ENCODE measurements at regions of chr1 and their contacts with region 1.

Region 1: GRCh38 chr1:5435414-5435813 is 556.8 kb downstream of the NPHP4 start:
- DNase-seq: no peak
- H3K4me3 ChIP-seq: no peak overlapping the region
- H3K27ac ChIP-seq: no peak overlapping the region; a peak in 1 of 4 replicates
- H3K4me1 ChIP-seq: peaks cover 0 to 22% of the 10 kb centered on the region in 2 experiments; a peak in 1 of 4 replicates
- H3K27me3 ChIP-seq: no peaks in the 10 kb centered on the region
- CTCF ChIP-seq: no peak
- EP300 ChIP-seq: no peak
- RAD21 ChIP-seq: no peak

Region 2: GRCh38 chr1:5448486-5448885 is 13.1 kb after region 1 on chr1:
- CTCF ChIA-PET with region 1: interaction called, 17 read pairs
- POLR2A ChIA-PET with region 1: no interaction called
- DNase-seq: no peak
- H3K4me3 ChIP-seq: no peak overlapping the region
- H3K27ac ChIP-seq: no peak overlapping the region; a peak in 1 of 4 replicates
- H3K4me1 ChIP-seq: peaks cover 0 to 19% of the 10 kb centered on the region in 2 experiments; a peak in 1 of 4 replicates
- H3K27me3 ChIP-seq: no peaks in the 10 kb centered on the region
- CTCF ChIP-seq: no peak
- EP300 ChIP-seq: no peak
- RAD21 ChIP-seq: peak; percentile 56

Measured in SK-N-SH (cell line).